GM12878 (cell line): ENCODE measurements at regions of chr15 and their contacts with region 1.

Region 1: DNA sequence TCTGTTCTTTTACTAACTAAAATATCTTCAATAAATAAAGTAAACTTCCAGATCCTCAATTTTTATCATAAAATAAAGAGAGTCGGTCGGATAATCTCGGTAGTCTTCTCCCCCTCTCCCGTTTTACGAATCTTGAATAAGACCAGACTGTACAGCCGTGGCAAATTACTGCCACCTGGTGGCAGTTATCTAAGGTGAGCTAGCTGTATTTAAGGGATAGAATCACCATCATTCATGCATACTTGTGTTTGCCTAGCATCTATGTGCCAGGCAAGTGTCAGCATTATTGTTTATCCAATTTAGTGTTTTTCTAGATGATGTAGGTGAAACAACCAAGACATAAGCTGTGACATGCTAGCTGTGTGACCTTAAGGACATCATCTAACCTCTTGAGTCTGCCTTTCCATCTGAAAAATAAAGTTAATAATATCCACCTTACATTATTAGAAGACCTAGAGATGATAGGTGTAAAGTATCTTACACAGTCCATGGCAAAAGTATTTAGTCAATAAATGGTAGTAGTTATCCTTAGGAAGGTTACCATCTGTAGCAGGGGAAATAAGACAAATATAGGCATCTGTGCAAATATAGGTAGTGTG is 21.3 kb downstream of the DUT start:
- DNase-seq: no peak
- ATAC-seq: peak; percentile 94
- H3K4me3 ChIP-seq: no peak overlapping the region
- H3K27ac ChIP-seq: no peak overlapping the region
- H3K4me1 ChIP-seq: no peaks in the 10 kb centered on the region
- H3K27me3 ChIP-seq: no peaks in the 10 kb centered on the region
- CTCF ChIP-seq: peak; percentile 74 to 82 (median 81)
- EP300 ChIP-seq: no peak
- POLR2A ChIP-seq: no peak
- RAD21 ChIP-seq: peak; percentile 82

Region 2: DNA sequence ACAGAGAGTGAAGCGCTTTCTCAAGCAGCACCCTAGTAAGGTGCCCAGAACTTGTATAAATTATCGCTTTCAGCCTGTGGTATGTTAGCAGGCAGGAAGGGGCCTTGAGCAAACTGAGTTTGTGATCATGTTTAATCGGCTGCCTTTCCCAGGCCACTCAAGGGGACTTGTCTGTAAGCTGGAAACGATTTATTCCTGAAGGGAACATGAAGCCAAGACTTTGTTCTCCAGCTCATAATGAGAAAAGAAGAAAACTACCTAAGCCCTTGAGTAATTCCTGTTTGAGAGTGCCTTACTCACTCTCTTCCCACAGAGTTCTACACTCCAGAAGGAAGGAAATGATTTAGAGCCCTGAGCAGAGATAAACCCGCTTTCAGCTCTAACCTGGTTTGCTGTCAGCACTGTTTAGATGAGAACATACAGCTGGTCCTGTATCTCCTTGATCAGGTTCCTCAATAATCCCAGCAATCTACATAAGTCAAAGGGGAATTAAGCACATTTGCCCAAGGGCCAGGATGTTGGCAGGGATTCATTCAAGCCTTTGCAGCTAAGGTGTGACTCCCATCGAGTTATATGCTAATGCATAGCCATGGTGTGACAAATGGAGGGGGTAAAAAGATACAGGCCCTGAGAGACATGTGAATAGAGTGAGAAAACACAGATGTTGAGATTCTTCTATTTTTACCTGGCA is 419.5 kb before region 1 on chr15:
- CTCF ChIA-PET with region 1: no interaction called
- POLR2A ChIA-PET with region 1: no interaction called
- RAD21 ChIA-PET with region 1: no interaction called
- SMC1A ChIA-PET with region 1: no interaction called
- in situ Hi-C with region 1: no loop called
- intact Hi-C with region 1: no loop called
- DNase-seq: no peak
- ATAC-seq: no peak
- H3K4me3 ChIP-seq: no peak overlapping the region
- H3K27ac ChIP-seq: no peak overlapping the region
- H3K4me1 ChIP-seq: no peaks in the 10 kb centered on the region
- H3K27me3 ChIP-seq: no peaks in the 10 kb centered on the region
- CTCF ChIP-seq: no peak
- EP300 ChIP-seq: no peak
- POLR2A ChIP-seq: no peak
- RAD21 ChIP-seq: no peak

Region 3: DNA sequence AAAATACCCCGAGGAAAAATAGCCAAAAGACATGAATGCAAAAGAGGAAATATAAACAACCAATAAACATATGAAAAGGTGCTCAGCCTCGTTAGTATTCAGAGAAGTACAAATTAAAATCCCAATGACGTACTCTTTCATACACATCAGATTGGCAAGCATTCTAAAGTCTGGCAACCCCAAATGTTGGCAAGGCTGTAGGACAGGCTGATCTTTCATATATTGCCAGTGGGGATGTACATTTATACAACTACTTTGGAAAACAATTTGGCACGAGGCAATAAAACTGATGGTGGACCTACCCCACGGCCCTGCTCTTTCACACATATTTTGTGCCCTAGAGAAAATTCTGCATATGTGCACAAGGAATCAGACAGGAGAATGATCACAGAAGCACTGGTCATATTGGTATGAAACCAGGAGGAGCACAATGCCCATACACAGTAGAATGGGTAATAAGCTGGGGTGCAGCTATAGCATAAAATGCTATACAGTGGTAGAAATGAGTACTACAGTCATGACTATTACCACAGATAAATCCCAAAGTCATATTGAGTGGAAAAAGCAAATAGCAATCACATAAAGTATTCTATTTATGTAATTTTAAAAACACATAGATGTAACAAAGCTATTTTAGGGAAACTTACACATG is 407.8 kb before region 1 on chr15:
- CTCF ChIA-PET with region 1: no interaction called
- POLR2A ChIA-PET with region 1: no interaction called
- RAD21 ChIA-PET with region 1: no interaction called
- SMC1A ChIA-PET with region 1: no interaction called
- in situ Hi-C with region 1: no loop called
- intact Hi-C with region 1: no loop called
- DNase-seq: no peak
- ATAC-seq: peak; percentile 41; the same call in 1 of the 3 replicates
- H3K4me3 ChIP-seq: no peak overlapping the region
- H3K27ac ChIP-seq: no peak overlapping the region
- H3K4me1 ChIP-seq: no peaks in the 10 kb centered on the region
- H3K27me3 ChIP-seq: no peaks in the 10 kb centered on the region
- CTCF ChIP-seq: no peak
- EP300 ChIP-seq: no peak
- POLR2A ChIP-seq: no peak
- RAD21 ChIP-seq: no peak

Region 4: GRCh38 chr15:48285329-48286214 is 67.0 kb before region 1 on chr15:
- CTCF ChIA-PET with region 1: interaction called, 78 read pairs
- POLR2A ChIA-PET with region 1: no interaction called
- RAD21 ChIA-PET with region 1: interaction called, 12 read pairs
- SMC1A ChIA-PET with region 1: interaction called, 9 read pairs
- in situ Hi-C with region 1: no loop called
- intact Hi-C with region 1: no loop called
- DNase-seq: peak; percentile 38
- ATAC-seq: peak; percentile 92
- H3K4me3 ChIP-seq: no peak overlapping the region
- H3K27ac ChIP-seq: no peak overlapping the region
- H3K4me1 ChIP-seq: no peaks in the 10 kb centered on the region
- H3K27me3 ChIP-seq: no peaks in the 10 kb centered on the region
- CTCF ChIP-seq: peak; percentile 59 to 75 (median 73); a peak in 5 of 6 replicates
- EP300 ChIP-seq: no peak
- POLR2A ChIP-seq: no peak
- RAD21 ChIP-seq: peak; percentile 57

Region 5: GRCh38 chr15:48324914-48325313 is 27.7 kb before region 1 on chr15:
- CTCF ChIA-PET with region 1: interaction called, 4 read pairs
- POLR2A ChIA-PET with region 1: no interaction called
- RAD21 ChIA-PET with region 1: interaction called, 6 read pairs
- SMC1A ChIA-PET with region 1: interaction called, 11 read pairs
- in situ Hi-C with region 1: no loop called
- intact Hi-C with region 1: no loop called
- DNase-seq: no peak
- ATAC-seq: peak; percentile 14; the same call in 1 of the 3 replicates
- H3K4me3 ChIP-seq: no peak overlapping the region
- H3K27ac ChIP-seq: no peak overlapping the region
- H3K4me1 ChIP-seq: peaks cover 11% of the 10 kb centered on the region; the same call in 1 of the 2 replicates
- H3K27me3 ChIP-seq: no peaks in the 10 kb centered on the region
- CTCF ChIP-seq: no peak
- EP300 ChIP-seq: no peak
- POLR2A ChIP-seq: no peak
- RAD21 ChIP-seq: no peak

Region 6: DNA sequence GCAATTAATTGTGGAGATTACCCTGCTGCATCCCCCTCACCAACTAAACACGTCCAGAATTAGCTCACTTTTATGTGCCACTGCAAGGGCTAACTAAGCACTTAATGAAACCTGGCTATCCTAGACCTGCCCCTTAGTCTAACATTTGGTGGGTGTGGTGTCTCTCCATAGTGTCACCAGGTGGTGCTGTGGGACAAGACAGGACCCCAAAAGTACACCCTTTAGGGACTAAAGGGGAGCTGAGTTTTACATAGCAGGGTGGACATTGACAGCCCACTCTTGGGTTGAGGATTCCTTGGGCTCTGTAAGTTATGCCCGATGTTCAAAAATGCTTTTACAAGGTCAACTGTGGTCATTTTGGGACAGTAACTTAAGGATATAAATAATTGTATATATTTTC is 15.6 kb before region 1 on chr15:
- CTCF ChIA-PET with region 1: interaction called, 123 read pairs
- POLR2A ChIA-PET with region 1: no interaction called
- RAD21 ChIA-PET with region 1: interaction called, 23 read pairs
- SMC1A ChIA-PET with region 1: interaction called, 43 read pairs
- in situ Hi-C with region 1: no loop called
- intact Hi-C with region 1: loop called (anchors 2 kb)
- DNase-seq: no peak
- ATAC-seq: peak; percentile 68
- H3K4me3 ChIP-seq: no peak overlapping the region
- H3K27ac ChIP-seq: no peak overlapping the region
- H3K4me1 ChIP-seq: peaks cover 3% of the 10 kb centered on the region; the same call in 1 of the 2 replicates
- H3K27me3 ChIP-seq: no peaks in the 10 kb centered on the region
- CTCF ChIP-seq: peak; percentile 50 to 62 (median 60); a peak in 4 of 6 replicates
- EP300 ChIP-seq: no peak
- POLR2A ChIP-seq: no peak
- RAD21 ChIP-seq: peak; percentile 50; the same call in 1 of the 2 replicates

Region 7: GRCh38 chr15:48395521-48396011 is 43.0 kb after region 1 on chr15:
- CTCF ChIA-PET with region 1: no interaction called
- POLR2A ChIA-PET with region 1: no interaction called
- RAD21 ChIA-PET with region 1: no interaction called
- SMC1A ChIA-PET with region 1: no interaction called
- in situ Hi-C with region 1: no loop called
- intact Hi-C with region 1: no loop called
- DNase-seq: no peak
- ATAC-seq: no peak
- H3K4me3 ChIP-seq: no peak overlapping the region
- H3K27ac ChIP-seq: no peak overlapping the region
- H3K4me1 ChIP-seq: no peaks in the 10 kb centered on the region
- H3K27me3 ChIP-seq: no peaks in the 10 kb centered on the region
- CTCF ChIP-seq: no peak
- EP300 ChIP-seq: no peak
- POLR2A ChIP-seq: no peak
- RAD21 ChIP-seq: no peak

Region 8: GRCh38 chr15:48622237-48622636 is 269.7 kb after region 1 on chr15:
- CTCF ChIA-PET with region 1: no interaction called
- POLR2A ChIA-PET with region 1: no interaction called
- RAD21 ChIA-PET with region 1: no interaction called
- SMC1A ChIA-PET with region 1: no interaction called
- in situ Hi-C with region 1: no loop called
- intact Hi-C with region 1: no loop called
- DNase-seq: no peak
- ATAC-seq: no peak
- H3K4me3 ChIP-seq: no peak overlapping the region
- H3K27ac ChIP-seq: no peak overlapping the region
- H3K4me1 ChIP-seq: no peaks in the 10 kb centered on the region
- H3K27me3 ChIP-seq: no peaks in the 10 kb centered on the region
- CTCF ChIP-seq: no peak
- EP300 ChIP-seq: no peak
- POLR2A ChIP-seq: no peak
- RAD21 ChIP-seq: no peak

Region 9: GRCh38 chr15:49155110-49155833 is 802.7 kb after region 1 on chr15 and contains the start of gene COPS2:
- CTCF ChIA-PET with region 1: no interaction called
- POLR2A ChIA-PET with region 1: no interaction called
- RAD21 ChIA-PET with region 1: no interaction called
- SMC1A ChIA-PET with region 1: no interaction called
- in situ Hi-C with region 1: loop called (anchors 25 kb)
- intact Hi-C with region 1: loop called (anchors 10 kb)
- DNase-seq: peak; percentile 98
- ATAC-seq: peak; percentile 94
- H3K4me3 ChIP-seq: peak within 1 kb of the TSS; percentile 97
- H3K27ac ChIP-seq: peak within 1 kb of the TSS; percentile 84
- H3K4me1 ChIP-seq: no peaks in the 10 kb centered on the region
- H3K27me3 ChIP-seq: no peaks in the 10 kb centered on the region
- CTCF ChIP-seq: no peak
- EP300 ChIP-seq: no peak
- POLR2A ChIP-seq: peak; percentile 95
- RAD21 ChIP-seq: no peak
- polyA plus RNA-seq, gene COPS2: 74.5 to 85.9 TPM

Region 10: GRCh38 chr15:50145451-50145872 is 1792.9 kb after region 1 on chr15:
- CTCF ChIA-PET with region 1: interaction called, 6 read pairs
- POLR2A ChIA-PET with region 1: no interaction called
- RAD21 ChIA-PET with region 1: no interaction called
- SMC1A ChIA-PET with region 1: no interaction called
- in situ Hi-C with region 1: loop called (anchors 10 kb)
- intact Hi-C with region 1: no loop called
- DNase-seq: peak; percentile 16
- ATAC-seq: peak; percentile 75
- H3K4me3 ChIP-seq: no peak overlapping the region
- H3K27ac ChIP-seq: no peak overlapping the region
- H3K4me1 ChIP-seq: no peaks in the 10 kb centered on the region
- H3K27me3 ChIP-seq: no peaks in the 10 kb centered on the region; a peak in 1 of 4 replicates
- CTCF ChIP-seq: peak; percentile 25 to 47 (median 31); a peak in 4 of 6 replicates
- EP300 ChIP-seq: no peak
- POLR2A ChIP-seq: no peak
- RAD21 ChIP-seq: peak; percentile 66